A673 (cell line): ENCODE measurements at regions of chr1 and their contacts with region 1.

Region 1: DNA sequence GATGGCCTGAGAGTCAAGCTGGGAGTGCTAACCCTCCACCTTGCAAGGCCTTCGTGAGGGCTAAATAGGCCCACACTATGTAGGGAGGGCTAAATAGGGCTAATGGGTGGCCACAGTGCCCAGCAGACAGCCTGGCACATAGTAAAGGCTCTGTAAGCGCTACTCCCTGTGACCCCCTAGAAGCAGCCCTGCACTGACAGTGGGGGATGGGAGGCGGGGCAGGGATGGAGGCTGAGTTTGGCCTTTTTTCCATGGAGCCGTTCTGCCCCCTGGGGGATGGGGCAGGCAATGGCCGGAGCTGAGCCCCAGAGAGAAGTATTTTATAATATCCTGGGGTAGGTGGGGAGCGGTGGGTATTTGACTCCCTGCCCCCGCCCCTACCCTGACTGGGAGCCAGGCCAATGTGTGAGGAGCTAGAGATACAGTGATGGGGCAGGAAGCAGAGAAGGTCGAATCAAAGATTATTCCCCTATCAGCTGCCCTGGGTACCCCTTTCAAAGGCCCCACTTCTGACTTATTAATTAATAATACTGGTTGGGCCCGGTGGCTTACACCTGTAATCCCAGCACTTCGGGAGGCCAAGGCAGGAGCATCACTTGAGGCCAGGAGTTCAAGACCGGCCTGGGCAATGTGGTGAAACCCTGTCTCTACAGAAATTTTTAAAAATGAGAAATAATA is 42.3 kb downstream of the LACTBL1 start:
- DNase-seq: peak; percentile 74
- H3K4me3 ChIP-seq: no peak overlapping the region
- H3K27ac ChIP-seq: no peak overlapping the region
- H3K4me1 ChIP-seq: no peaks in the 10 kb centered on the region
- H3K27me3 ChIP-seq: no peaks in the 10 kb centered on the region
- CTCF ChIP-seq: peak; percentile 83

Region 2: GRCh38 chr1:22641906-22642636 is 288.3 kb before region 1 on chr1:
- CTCF ChIA-PET with region 1: no interaction called
- POLR2A ChIA-PET with region 1: no interaction called
- intact Hi-C with region 1: no loop called
- DNase-seq: peak; percentile 76
- H3K4me3 ChIP-seq: no peak overlapping the region
- H3K27ac ChIP-seq: no peak overlapping the region
- H3K4me1 ChIP-seq: no peaks in the 10 kb centered on the region
- H3K27me3 ChIP-seq: no peaks in the 10 kb centered on the region
- CTCF ChIP-seq: peak; percentile 90

Region 3: GRCh38 chr1:22673486-22674409 is 256.6 kb before region 1 on chr1:
- CTCF ChIA-PET with region 1: interaction called, 8 read pairs
- POLR2A ChIA-PET with region 1: no interaction called
- intact Hi-C with region 1: loop called (anchors 1 kb)
- DNase-seq: peak; percentile 63
- H3K4me3 ChIP-seq: no peak overlapping the region
- H3K27ac ChIP-seq: no peak overlapping the region
- H3K4me1 ChIP-seq: peaks cover 21% of the 10 kb centered on the region
- H3K27me3 ChIP-seq: no peaks in the 10 kb centered on the region
- CTCF ChIP-seq: peak; percentile 88